ENCODE measurements at regions of chr17 and their contacts with region 1.

Region 1: DNA sequence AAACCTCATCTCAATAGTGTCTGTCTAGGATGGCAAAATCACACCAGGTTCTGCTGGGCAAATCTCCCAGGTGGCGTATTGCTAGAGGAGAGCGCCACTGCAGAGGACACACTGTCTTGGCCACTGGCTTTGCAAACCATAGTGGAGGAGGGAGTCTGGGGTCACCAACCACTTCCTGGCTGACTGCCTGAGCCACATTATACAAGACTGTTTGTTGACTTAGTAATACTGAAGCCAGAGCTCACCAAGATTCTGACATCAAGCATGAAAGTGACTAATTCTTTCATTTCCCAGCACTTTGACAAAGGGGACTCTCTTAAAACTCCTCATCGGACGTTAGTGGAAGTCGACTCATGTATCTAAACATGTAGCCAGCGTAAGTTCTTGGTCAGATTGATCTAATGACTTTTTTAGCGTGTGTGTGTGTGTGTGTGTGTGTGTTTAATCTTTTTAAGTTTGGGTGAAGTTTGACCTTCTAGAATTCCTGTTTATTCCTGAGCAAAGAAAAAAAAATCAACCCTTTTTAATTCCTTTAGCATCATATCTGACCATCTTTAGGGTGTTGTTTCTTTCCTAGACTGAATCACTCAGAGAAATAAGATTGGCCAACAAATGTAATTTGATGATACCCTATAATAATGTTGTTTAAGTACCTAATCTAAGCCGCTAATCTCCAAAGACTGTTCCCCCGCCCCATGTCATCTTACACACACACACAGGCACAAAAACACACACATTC is 13.7 kb downstream of the PITPNC1 start:
- DNase-seq: peak; percentile 32 to 76 (median 54)
- ATAC-seq: peak; percentile 80 to 83
- H3K4me3 Mint-ChIP-seq: peak overlapping the region; percentile 59 to 88 (median 80)
- H3K27ac Mint-ChIP-seq: peak overlapping the region; percentile 90 to 98 (median 94)
- H3K4me1 Mint-ChIP-seq: peaks cover 30 to 90% (median 77%) of the 10 kb centered on the region in 4 donors
- H3K27me3 Mint-ChIP-seq: no peaks in the 10 kb centered on the region

Region 2: GRCh38 chr17:67359960-67360773 is 30.6 kb before region 1 on chr17:
- POLR2A ChIA-PET with region 1: no interaction called
- DNase-seq: peak in 9 of 10 donors; percentile 19 to 78 (median 63)
- ATAC-seq: peak; percentile 94 to 99
- H3K4me3 Mint-ChIP-seq: peak overlapping the region; percentile 11 to 60 (median 46)
- H3K27ac Mint-ChIP-seq: peak overlapping the region; percentile 38 to 92 (median 88)
- H3K4me1 Mint-ChIP-seq: peaks cover 30 to 77% (median 62%) of the 10 kb centered on the region in 4 donors
- H3K27me3 Mint-ChIP-seq: no peaks in the 10 kb centered on the region

Region 3: DNA sequence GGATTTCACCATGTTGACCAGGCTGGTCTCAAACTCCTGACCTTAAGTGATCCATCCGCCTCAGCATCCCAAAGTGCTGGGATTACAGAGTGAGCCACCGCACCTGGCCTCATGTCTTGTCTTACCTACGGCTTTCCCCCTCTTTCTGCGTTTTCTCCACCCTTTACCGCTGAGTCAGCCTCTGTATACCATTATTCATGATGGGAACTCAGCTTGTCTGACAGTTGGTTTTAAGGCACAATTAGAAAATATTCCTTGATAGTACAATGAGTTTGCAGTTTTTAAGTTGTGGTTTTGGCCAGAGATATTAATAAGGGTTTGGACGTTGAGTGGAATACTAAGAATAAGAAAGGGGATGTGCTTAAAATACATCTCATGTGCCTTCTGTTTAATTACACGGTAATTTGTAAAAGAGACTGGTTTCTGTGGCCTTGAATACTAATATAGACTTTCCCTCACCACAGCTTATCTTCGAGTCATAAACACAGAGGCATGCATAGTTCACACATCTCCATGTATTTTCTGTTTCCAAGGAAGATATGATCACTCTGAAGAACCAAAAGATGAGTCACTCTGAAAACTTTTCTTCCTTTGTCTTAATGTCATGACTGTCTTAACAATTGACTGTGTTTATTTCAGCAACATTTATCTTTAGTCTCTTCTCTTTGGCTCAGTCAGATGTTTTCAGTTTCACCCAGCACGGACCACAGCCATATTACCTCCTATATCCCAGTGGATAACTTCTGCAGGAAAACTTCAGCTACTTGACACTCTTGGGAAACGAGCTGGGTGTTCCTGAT is 40.6 kb after region 1 on chr17:
- POLR2A ChIA-PET with region 1: interaction called, 10 read pairs
- DNase-seq: no peak
- ATAC-seq: peak in 1 of 2 donors; percentile 4
- H3K4me3 Mint-ChIP-seq: peak overlapping the region in 5 of 10 donors; percentile 1 to 36 (median 21)
- H3K27ac Mint-ChIP-seq: peak overlapping the region; percentile 63 to 93 (median 88)
- H3K4me1 Mint-ChIP-seq: peaks cover 31 to 82% (median 70%) of the 10 kb centered on the region in 4 donors
- H3K27me3 Mint-ChIP-seq: no peaks in the 10 kb centered on the region

Region 4: DNA sequence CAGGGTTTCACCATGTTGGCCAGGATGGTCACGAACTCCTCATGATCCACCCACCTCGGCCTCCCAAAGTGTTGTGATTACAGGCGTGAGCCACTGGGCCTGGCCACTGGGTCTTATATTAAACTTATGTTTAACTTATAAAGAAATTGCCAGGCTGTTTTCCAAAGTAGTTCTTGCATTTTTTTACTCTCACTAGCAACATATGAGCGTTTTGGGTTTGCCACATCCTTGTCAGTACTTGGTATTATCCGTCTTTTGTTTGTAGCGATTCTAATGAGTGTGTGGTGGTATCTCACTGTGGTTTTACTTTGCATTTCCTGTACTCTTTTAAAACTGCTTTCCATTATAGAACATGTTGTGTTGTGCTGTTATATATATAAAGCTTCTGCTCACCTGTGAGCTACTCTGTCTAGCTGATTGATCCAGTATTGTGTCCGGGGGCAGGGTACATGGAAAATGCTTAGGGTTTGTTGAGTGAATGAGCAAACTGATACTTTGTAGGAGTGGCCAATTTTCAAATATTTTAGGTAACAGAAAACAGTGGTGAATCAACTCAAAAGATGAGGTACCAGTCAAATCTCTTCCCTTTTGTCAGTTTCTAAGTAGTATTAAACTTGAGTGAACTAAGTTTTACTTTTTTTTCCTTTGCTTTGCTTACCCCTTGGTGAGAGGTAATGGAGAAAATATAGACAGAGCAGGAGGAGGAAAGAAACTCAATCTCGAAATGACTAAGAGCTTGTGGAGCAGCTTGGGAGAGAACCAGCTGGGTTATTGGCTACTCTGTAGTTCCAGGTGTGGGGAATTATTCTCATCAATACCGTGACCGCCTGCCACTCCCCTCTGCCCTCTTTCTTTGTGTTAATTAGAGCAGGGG is 62.1 kb after region 1 on chr17:
- POLR2A ChIA-PET with region 1: interaction called, 26 read pairs
- DNase-seq: peak in 4 of 10 donors; percentile 59 to 84 (median 75)
- ATAC-seq: peak; percentile 80 to 93
- H3K4me3 Mint-ChIP-seq: peak overlapping the region; percentile 63 to 88 (median 78)
- H3K27ac Mint-ChIP-seq: peak overlapping the region; percentile 89 to 100 (median 96)
- H3K4me1 Mint-ChIP-seq: peaks cover 32 to 97% (median 89%) of the 10 kb centered on the region in 4 donors
- H3K27me3 Mint-ChIP-seq: no peaks in the 10 kb centered on the region

Region 5: DNA sequence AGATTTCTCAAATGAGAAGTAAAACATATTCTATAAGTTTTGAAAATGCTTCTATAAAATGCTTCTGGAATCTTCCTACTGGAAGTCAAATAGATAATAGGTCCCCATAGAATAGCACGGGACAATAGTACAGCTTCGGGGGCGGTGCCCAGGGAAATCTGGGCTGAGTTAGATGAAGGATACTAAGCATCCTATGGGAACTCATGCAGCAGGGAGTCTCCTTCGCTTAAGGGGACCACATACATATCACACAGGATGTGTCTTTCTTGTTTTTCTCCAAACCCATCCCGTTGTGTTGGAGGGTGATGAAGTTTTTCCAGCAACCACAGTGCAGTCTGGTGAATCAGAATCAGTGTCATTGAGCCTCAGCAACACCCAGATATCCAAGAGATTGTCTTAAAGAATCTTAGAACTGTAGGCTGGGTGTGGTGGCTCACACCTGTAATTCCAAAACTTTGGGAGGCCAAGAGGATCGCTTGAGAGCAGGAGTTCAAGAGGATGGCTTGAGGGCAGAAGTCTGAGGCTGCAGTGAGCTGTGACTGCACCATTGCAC is 70.5 kb after region 1 on chr17:
- POLR2A ChIA-PET with region 1: interaction called, 15 read pairs
- DNase-seq: no peak
- ATAC-seq: peak; percentile 10 to 35
- H3K4me3 Mint-ChIP-seq: peak overlapping the region in 8 of 10 donors; percentile 7 to 84 (median 71)
- H3K27ac Mint-ChIP-seq: peak overlapping the region; percentile 77 to 100 (median 98)
- H3K4me1 Mint-ChIP-seq: peaks cover 34 to 83% (median 78%) of the 10 kb centered on the region in 4 donors
- H3K27me3 Mint-ChIP-seq: no peaks in the 10 kb centered on the region

Region 6: DNA sequence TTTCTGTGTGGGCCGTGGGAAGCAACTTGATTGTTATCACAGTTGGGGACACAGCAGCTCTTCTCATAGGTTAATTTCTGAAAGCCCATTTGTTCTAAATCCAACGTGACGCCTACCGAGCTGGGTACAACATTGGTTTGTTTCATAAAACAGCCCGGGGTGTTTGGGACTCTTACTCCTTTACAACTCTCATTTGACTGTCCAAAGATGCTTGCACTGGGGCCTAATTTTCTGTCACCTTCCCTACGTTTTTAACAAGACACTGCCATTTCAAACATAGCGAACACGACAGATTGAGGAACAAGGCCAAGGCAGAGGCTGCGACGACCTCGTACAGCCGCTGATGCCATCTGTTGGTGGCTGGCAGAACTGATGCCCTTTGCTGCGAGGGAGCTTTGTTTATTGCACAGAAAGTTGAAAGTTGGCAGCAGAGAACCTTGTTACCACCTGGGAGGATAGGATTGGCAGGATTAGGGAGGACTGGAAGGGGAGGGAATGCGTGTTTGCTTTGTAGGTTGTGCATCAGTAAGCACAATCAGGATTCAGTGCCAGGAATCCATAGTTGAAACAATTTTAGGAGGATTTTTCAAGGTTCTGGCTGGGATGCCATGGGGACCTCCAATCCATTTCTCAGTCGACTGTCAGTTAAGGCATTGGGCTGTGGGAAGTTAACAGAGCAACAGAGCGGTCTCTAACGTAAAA is 84.6 kb after region 1 on chr17:
- POLR2A ChIA-PET with region 1: interaction called, 20 read pairs
- DNase-seq: peak; percentile 68 to 91 (median 85)
- ATAC-seq: peak; percentile 70 to 75
- H3K4me3 Mint-ChIP-seq: peak overlapping the region; percentile 66 to 84 (median 76)
- H3K27ac Mint-ChIP-seq: peak overlapping the region; percentile 90 to 98 (median 96)
- H3K4me1 Mint-ChIP-seq: peaks cover 49 to 79% (median 71%) of the 10 kb centered on the region in 4 donors
- H3K27me3 Mint-ChIP-seq: no peaks in the 10 kb centered on the region